ENCODE measurements at regions of chr7 and their contacts with region 1.

Region 1: GRCh38 chr7:129091484-129092002 is 36.6 kb upstream of the TNPO3 start:
- DNase-seq: peak; percentile 77 to 89
- ATAC-seq: peak; percentile 89 to 98 (median 97)
- H3K4me3 ChIP-seq: no peak overlapping the region
- H3K4me3 Mint-ChIP-seq: no peak overlapping the region
- H3K27ac ChIP-seq: no peak overlapping the region
- H3K27ac Mint-ChIP-seq: peak overlapping the region in 1 of 2 donors; percentile 48
- H3K4me1 ChIP-seq: peaks cover 10% of the 10 kb centered on the region
- H3K4me1 Mint-ChIP-seq: peaks cover 12 to 13% of the 10 kb centered on the region in 2 donors
- H3K27me3 ChIP-seq: no peaks in the 10 kb centered on the region
- H3K27me3 Mint-ChIP-seq: peaks cover 0 to 2% of the 10 kb centered on the region in 2 donors
- CTCF ChIP-seq: peak; percentile 97

Region 2: DNA sequence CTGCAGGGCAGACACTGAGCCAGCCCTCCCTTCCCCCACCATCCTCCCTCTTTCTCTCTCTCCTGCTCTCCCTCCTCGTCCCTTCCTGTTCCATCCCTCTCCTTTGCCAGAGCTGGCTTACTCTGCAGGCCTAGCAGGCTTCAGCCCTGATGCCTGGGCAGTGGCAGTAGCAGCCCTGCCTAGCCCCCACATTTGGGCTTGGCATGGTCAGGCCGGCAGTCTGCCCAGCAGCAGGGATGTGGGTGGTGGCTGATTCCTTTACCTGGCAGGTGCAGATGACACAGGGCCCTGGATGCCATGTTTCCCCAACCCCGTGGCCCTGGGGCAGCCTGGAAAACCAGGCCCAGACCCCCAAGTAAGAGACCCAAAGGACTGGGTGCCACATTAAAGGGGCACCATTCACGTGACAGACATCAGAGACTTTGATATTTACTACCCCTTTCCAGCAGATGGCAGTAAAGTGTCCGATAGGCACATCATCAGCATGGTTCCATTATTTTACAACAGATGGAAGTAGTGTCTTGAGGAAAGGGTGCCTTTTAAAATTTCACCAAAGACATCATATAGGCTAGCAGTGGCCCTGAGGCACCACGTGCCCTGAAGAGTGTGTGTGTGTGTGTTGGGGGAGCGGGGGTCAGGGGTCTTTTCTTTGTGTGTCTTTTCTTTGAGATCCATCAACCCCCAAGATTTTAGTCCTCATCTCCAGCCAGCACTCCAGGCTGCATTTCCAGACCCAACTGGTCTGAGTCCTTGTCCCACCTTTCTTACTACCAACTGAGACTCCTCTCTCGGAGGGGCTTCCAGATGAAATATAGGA is 187.0 kb before region 1 on chr7:
- intact Hi-C with region 1: loop called (anchors 1 kb)
- DNase-seq: peak in 1 of 2 donors; percentile 81
- ATAC-seq: peak; percentile 64 to 88 (median 87)
- H3K4me3 ChIP-seq: no peak overlapping the region
- H3K4me3 Mint-ChIP-seq: no peak overlapping the region
- H3K27ac ChIP-seq: no peak overlapping the region
- H3K27ac Mint-ChIP-seq: no peak overlapping the region
- H3K4me1 ChIP-seq: peaks cover 7% of the 10 kb centered on the region
- H3K4me1 Mint-ChIP-seq: no peaks in the 10 kb centered on the region
- H3K27me3 ChIP-seq: peaks cover 3% of the 10 kb centered on the region
- H3K27me3 Mint-ChIP-seq: peaks cover 24 to 39% of the 10 kb centered on the region in 2 donors
- CTCF ChIP-seq: peak; percentile 60

Region 3: GRCh38 chr7:129054438-129055293 is 36.9 kb before region 1 on chr7 and contains the start of gene TNPO3:
- intact Hi-C with region 1: loop called (anchors 1 kb)
- DNase-seq: peak; percentile 85 to 94
- ATAC-seq: peak; percentile 79 to 93 (median 85)
- H3K4me3 ChIP-seq: peak within 1 kb of the TSS; percentile 90
- H3K4me3 Mint-ChIP-seq: peak within 1 kb of the TSS; percentile 97
- H3K27ac ChIP-seq: peak within 1 kb of the TSS; percentile 90
- H3K27ac Mint-ChIP-seq: peak within 1 kb of the TSS; percentile 97 to 99
- H3K4me1 ChIP-seq: peaks cover 17% of the 10 kb centered on the region
- H3K4me1 Mint-ChIP-seq: peaks cover 36 to 38% of the 10 kb centered on the region in 2 donors
- H3K27me3 ChIP-seq: no peaks in the 10 kb centered on the region
- H3K27me3 Mint-ChIP-seq: peaks cover 4 to 14% of the 10 kb centered on the region in 2 donors
- CTCF ChIP-seq: no peak
- total RNA-seq, gene TNPO3: 33.9 to 41.1 (median 37.9) TPM

Region 4: DNA sequence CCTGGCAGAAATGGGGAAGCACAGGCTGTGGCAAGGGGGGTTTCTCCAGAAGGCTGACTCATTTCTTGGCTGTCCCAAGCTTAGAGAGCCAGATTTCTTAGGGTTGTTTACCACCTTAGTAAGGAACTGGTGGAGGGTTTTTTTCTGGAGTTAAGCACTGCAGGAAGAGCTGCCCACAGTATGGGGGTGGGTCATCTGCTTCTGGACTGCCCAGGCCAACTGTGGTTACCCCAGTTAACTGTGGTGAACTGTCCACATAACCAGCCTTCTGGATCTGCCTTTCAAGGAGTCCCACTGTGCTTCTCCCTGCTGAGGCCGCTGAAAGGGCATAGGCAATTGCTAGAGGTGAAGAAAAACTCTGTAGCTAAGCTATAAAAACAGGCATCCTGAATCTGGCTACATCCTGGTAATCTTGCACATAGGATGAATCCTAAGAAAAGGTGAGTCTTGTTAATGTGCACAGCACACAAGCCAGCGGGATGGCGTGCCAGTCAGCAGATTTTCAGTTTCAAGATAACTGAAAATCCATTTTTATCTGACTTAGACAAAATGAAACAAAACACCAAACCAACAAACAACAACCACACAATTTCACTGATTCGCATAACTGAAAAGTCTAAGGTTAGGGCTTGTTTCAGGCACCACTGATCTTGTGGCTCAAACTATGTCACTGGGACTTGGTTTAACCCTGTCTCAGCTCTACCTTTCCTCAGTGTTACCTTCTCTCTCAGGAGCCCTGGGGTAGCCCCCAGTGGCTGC is 31.4 kb after region 1 on chr7:
- intact Hi-C with region 1: no loop called
- DNase-seq: peak in 1 of 2 donors; percentile 13
- ATAC-seq: peak in 2 of 3 donors; percentile 29 to 46
- H3K4me3 ChIP-seq: no peak overlapping the region
- H3K4me3 Mint-ChIP-seq: no peak overlapping the region
- H3K27ac ChIP-seq: no peak overlapping the region
- H3K27ac Mint-ChIP-seq: no peak overlapping the region
- H3K4me1 ChIP-seq: peaks cover 6% of the 10 kb centered on the region
- H3K4me1 Mint-ChIP-seq: no peaks in the 10 kb centered on the region
- H3K27me3 ChIP-seq: no peaks in the 10 kb centered on the region
- H3K27me3 Mint-ChIP-seq: peaks cover 6 to 14% of the 10 kb centered on the region in 2 donors
- CTCF ChIP-seq: no peak

Measured in natural killer cell (primary cell).